BJ (cell line): ENCODE measurements at regions of chr3 and their contacts with region 1.

Region 1: GRCh38 chr3:55673764-55674163 is 186.7 kb upstream of the WNT5A start:
- DNase-seq: no peak
- H3K4me3 ChIP-seq: no peak overlapping the region
- H3K27me3 ChIP-seq: no peaks in the 10 kb centered on the region
- CTCF ChIP-seq: no peak

Region 2: GRCh38 chr3:55746808-55747413 is 73.1 kb after region 1 on chr3:
- CTCF ChIA-PET with region 1: no interaction called
- POLR2A ChIA-PET with region 1: no interaction called
- DNase-seq: no peak
- H3K4me3 ChIP-seq: no peak overlapping the region
- H3K27me3 ChIP-seq: no peaks in the 10 kb centered on the region
- CTCF ChIP-seq: peak; percentile 49

Region 3: GRCh38 chr3:56111606-56112304 is 438.0 kb after region 1 on chr3:
- CTCF ChIA-PET with region 1: no interaction called
- POLR2A ChIA-PET with region 1: interaction called, 19 read pairs
- DNase-seq: peak; percentile 86
- H3K4me3 ChIP-seq: no peak overlapping the region
- H3K27me3 ChIP-seq: no peaks in the 10 kb centered on the region
- CTCF ChIP-seq: no peak